Activated naive CD8-positive, alpha-beta T cell treated with anti-CD3 and anti-CD28 coated beads, Interleukin-2, amount 10 ng/mL, durations not matched to agents 7 days and 5 days (primary cell): ENCODE measurements at regions of chr17 and their contacts with region 1.

Region 1: GRCh38 chr17:11997147-11997846 is at the start of gene ZNF18:
- DNase-seq: peak; percentile 96
- ATAC-seq: peak; percentile 98
- H3K4me3 Mint-ChIP-seq: peak within 1 kb of the TSS; percentile 100
- H3K27ac Mint-ChIP-seq: peak within 1 kb of the TSS; percentile 99
- H3K4me1 Mint-ChIP-seq: peaks cover 18% of the 10 kb centered on the region
- H3K27me3 Mint-ChIP-seq: peaks cover 4% of the 10 kb centered on the region
- total RNA-seq, gene ZNF18: 16.3 to 18.1 TPM

Region 2: DNA sequence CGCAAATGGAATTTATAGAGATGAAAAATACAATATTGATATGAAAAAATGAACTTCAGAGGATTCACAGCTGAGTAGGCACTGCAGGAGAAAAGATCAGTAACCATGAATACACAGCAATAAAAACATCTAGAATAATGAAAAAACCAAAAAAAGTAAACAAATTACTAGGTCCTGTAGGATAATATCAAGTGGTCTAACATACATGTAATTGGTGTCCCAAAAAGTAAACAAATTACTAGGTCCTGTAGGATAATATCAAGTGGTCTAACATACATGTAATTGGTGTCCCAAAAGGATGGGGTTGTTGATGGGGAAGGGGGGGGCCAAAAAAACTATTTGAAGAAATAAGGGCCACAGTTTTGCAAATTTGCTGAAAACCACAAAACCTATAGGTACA is 43.4 kb before region 1 on chr17:
- POLR2A ChIA-PET with region 1: no interaction called
- DNase-seq: no peak
- ATAC-seq: no peak
- H3K4me3 Mint-ChIP-seq: no peak overlapping the region
- H3K27ac Mint-ChIP-seq: no peak overlapping the region
- H3K4me1 Mint-ChIP-seq: no peaks in the 10 kb centered on the region
- H3K27me3 Mint-ChIP-seq: no peaks in the 10 kb centered on the region

Region 3: GRCh38 chr17:11986942-11987329 is 10.4 kb before region 1 on chr17:
- POLR2A ChIA-PET with region 1: interaction called, 11 read pairs
- DNase-seq: no peak
- ATAC-seq: no peak
- H3K4me3 Mint-ChIP-seq: no peak overlapping the region
- H3K27ac Mint-ChIP-seq: no peak overlapping the region
- H3K4me1 Mint-ChIP-seq: peaks cover 5% of the 10 kb centered on the region
- H3K27me3 Mint-ChIP-seq: no peaks in the 10 kb centered on the region

Region 4: GRCh38 chr17:12020642-12021622 is 23.6 kb after region 1 on chr17 and contains the start of gene MAP2K4:
- POLR2A ChIA-PET with region 1: interaction called, 179 read pairs
- DNase-seq: peak; percentile 99
- ATAC-seq: peak; percentile 88
- H3K4me3 Mint-ChIP-seq: peak within 1 kb of the TSS; percentile 83
- H3K27ac Mint-ChIP-seq: peak within 1 kb of the TSS; percentile 67
- H3K4me1 Mint-ChIP-seq: peaks cover 36% of the 10 kb centered on the region
- H3K27me3 Mint-ChIP-seq: no peaks in the 10 kb centered on the region
- total RNA-seq, gene MAP2K4: 44.6 to 47.1 TPM

Region 5: GRCh38 chr17:12053552-12053951 is 56.3 kb after region 1 on chr17:
- POLR2A ChIA-PET with region 1: interaction called, 37 read pairs
- DNase-seq: no peak
- ATAC-seq: peak; percentile 19
- H3K4me3 Mint-ChIP-seq: peak overlapping the region; percentile 85
- H3K27ac Mint-ChIP-seq: peak overlapping the region; percentile 88
- H3K4me1 Mint-ChIP-seq: peaks cover 62% of the 10 kb centered on the region
- H3K27me3 Mint-ChIP-seq: no peaks in the 10 kb centered on the region